HepG2 (cell line): ENCODE measurements at regions of chr3 and their contacts with region 1.

Region 1: GRCh38 chr3:80696281-80696680 is 928.5 kb upstream of the ROBO1 start:
- DNase-seq: peak; percentile 94
- ATAC-seq: peak; percentile 99
- H3K4me3 ChIP-seq: peak overlapping the region in 1 of 3 experiments; percentile 13; a peak in 1 of 6 replicates
- H3K27ac ChIP-seq: peak overlapping the region; percentile 41
- H3K4me1 ChIP-seq: peaks cover 27% of the 10 kb centered on the region
- H3K27me3 ChIP-seq: no peaks in the 10 kb centered on the region
- CTCF ChIP-seq: no peak
- EP300 ChIP-seq: peak in 1 of 2 experiments; percentile 74; a peak in 2 of 4 replicates
- POLR2A ChIP-seq: no peak
- RAD21 ChIP-seq: no peak

Region 2: DNA sequence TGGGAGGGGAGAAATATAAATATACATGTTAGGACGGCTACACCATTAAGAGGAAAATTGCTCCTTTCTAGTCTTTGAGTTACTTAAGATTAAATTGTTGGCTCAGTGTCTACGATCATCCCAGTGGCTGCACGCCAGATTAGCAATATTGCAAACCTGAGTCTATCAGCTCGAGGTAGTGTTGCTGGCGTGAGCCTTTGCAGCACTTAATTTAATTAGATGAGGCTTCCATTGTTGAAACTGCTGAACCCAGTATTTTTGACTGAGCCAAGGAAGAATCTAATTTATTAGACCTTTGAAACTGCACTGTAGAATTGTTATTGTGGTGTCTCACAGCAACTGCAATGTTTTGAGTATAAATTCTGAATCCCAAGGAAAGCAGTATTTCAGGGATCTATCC is 146.1 kb before region 1 on chr3:
- CTCF ChIA-PET with region 1: no interaction called
- POLR2A ChIA-PET with region 1: no interaction called
- in situ Hi-C with region 1: no loop called
- intact Hi-C with region 1: no loop called
- DNase-seq: no peak
- ATAC-seq: no peak
- H3K4me3 ChIP-seq: no peak overlapping the region
- H3K27ac ChIP-seq: no peak overlapping the region
- H3K4me1 ChIP-seq: no peaks in the 10 kb centered on the region
- H3K27me3 ChIP-seq: no peaks in the 10 kb centered on the region
- CTCF ChIP-seq: no peak
- EP300 ChIP-seq: no peak
- POLR2A ChIP-seq: no peak
- RAD21 ChIP-seq: no peak

Region 3: GRCh38 chr3:80733522-80734176 is 37.4 kb after region 1 on chr3:
- CTCF ChIA-PET with region 1: no interaction called
- POLR2A ChIA-PET with region 1: no interaction called
- in situ Hi-C with region 1: no loop called
- intact Hi-C with region 1: loop called (anchors 5 kb)
- DNase-seq: peak; percentile 95
- ATAC-seq: peak; percentile 96
- H3K4me3 ChIP-seq: no peak overlapping the region; a peak in 1 of 6 replicates
- H3K27ac ChIP-seq: peak overlapping the region; percentile 79
- H3K4me1 ChIP-seq: peaks cover 30% of the 10 kb centered on the region
- H3K27me3 ChIP-seq: no peaks in the 10 kb centered on the region; a peak in 1 of 5 replicates
- CTCF ChIP-seq: no peak
- EP300 ChIP-seq: peak; percentile 51 to 94; a peak in 2 of 4 replicates
- POLR2A ChIP-seq: no peak
- RAD21 ChIP-seq: no peak

Region 4: GRCh38 chr3:81214631-81215030 is 518.4 kb after region 1 on chr3:
- CTCF ChIA-PET with region 1: no interaction called
- POLR2A ChIA-PET with region 1: no interaction called
- in situ Hi-C with region 1: no loop called
- intact Hi-C with region 1: no loop called
- DNase-seq: no peak
- ATAC-seq: no peak
- H3K4me3 ChIP-seq: no peak overlapping the region
- H3K27ac ChIP-seq: no peak overlapping the region
- H3K4me1 ChIP-seq: no peaks in the 10 kb centered on the region
- H3K27me3 ChIP-seq: no peaks in the 10 kb centered on the region
- CTCF ChIP-seq: no peak
- EP300 ChIP-seq: no peak
- POLR2A ChIP-seq: no peak
- RAD21 ChIP-seq: no peak